CD8-positive, alpha-beta T cell (primary cell): ENCODE measurements at regions of chr15 and their contacts with region 1.

Region 1: DNA sequence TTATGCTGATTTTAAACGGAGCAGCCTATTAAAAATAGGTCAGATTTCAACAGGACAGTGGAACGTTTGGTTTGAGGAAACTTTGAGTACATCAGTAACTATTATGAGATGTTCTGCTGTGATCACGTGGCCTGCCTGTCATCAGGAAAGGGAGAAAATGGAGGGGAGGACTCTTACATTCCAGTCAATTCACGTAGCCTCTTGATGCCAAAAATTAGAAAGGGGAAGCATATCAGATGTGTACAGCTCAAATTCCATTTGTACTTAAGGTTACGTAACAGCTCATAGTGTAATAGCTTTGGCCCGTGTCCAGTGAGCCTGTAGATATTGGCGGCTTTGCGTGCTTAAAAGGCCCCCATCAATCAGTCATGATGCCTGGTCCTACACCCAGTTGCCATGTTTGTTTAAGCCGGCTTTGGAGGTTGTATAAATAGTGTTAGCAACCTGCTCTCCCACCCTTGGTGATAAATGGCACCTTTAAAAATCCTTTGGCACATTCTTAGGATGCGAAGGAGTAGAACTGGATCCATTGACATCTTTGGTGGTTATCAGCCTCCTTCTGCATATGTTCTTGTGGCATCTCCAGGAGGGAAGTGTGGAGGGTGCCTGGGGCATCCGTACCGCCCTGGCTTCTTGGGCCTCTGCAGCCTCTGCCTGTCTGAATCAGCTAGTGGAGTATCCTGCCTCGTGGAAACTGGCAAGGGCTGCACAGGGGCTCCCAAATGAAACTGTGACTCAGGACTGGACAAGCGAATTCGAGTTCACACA is 163.9 kb downstream of the THSD4 start:
- DNase-seq: no peak
- ATAC-seq: no peak
- H3K4me3 ChIP-seq: no peak overlapping the region
- H3K4me3 Mint-ChIP-seq: no peak overlapping the region
- H3K27ac ChIP-seq: no peak overlapping the region
- H3K27ac Mint-ChIP-seq: no peak overlapping the region
- H3K4me1 ChIP-seq: no peaks in the 10 kb centered on the region
- H3K4me1 Mint-ChIP-seq: no peaks in the 10 kb centered on the region
- H3K27me3 ChIP-seq: no peaks in the 10 kb centered on the region
- H3K27me3 Mint-ChIP-seq: peaks cover 8% of the 10 kb centered on the region
- CTCF ChIP-seq: no peak

Region 2: DNA sequence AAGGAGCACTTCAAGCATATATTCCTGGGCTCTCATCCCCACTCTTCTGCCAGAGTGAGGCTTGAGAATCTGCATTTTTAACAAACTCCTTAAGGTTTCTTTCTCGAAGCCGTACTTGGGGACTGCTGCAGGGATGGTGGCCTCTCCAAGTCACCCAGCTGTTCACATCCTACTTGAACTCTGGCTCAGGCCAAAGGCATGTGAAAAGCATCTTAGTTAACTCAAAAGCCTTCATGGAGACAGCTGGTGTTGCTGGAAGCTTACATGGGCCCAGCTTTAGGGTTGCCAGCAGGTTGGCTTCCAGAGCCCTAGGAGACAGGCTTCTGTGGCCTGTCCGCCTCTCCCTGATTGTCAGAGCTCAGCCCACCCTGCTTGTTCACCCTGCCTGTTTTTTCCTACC is 24.7 kb before region 1 on chr15:
- CTCF ChIA-PET with region 1: no interaction called
- POLR2A ChIA-PET with region 1: no interaction called
- intact Hi-C with region 1: loop called in 1 of 2 experiments (anchors 1 kb)
- DNase-seq: no peak
- ATAC-seq: no peak
- H3K4me3 ChIP-seq: no peak overlapping the region
- H3K4me3 Mint-ChIP-seq: no peak overlapping the region
- H3K27ac ChIP-seq: no peak overlapping the region
- H3K27ac Mint-ChIP-seq: no peak overlapping the region
- H3K4me1 ChIP-seq: no peaks in the 10 kb centered on the region
- H3K4me1 Mint-ChIP-seq: no peaks in the 10 kb centered on the region
- H3K27me3 ChIP-seq: no peaks in the 10 kb centered on the region
- H3K27me3 Mint-ChIP-seq: peaks cover 2% of the 10 kb centered on the region
- CTCF ChIP-seq: no peak